Right ventricle myocardium inferior (tissue), 1 donor: ENCODE measurements at regions of chr12 and their contacts with region 1.

Region 1: GRCh38 chr12:125890971-125891370 is 825.7 kb downstream of the AACS start:
- DNase-seq: no peak
- ATAC-seq: peak; percentile 92

Region 2: GRCh38 chr12:125871811-125872594 is 19.0 kb before region 1 on chr12:
- intact Hi-C with region 1: loop called (anchors 1 kb)
- DNase-seq: peak; percentile 55
- ATAC-seq: peak; percentile 97

Region 3: DNA sequence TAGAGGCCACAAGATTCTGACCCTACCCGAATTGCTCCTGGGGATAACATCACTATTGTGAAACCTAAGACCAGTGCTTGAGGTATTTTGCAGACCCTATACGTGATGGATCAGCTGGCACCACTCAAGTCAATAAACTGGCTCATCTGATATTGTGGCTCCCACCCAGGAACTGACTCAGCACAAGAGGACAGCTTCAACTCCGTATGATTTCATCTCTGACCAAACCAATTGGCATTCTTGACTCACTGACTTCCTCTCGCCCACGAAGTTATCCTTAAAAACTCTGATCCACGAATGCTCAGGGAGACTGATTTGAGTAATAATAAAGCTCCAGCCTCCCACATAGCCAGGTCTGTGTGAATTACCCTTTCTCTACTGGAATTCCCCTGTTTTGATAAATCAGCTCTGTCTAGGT is 1339.9 kb after region 1 on chr12:
- intact Hi-C with region 1: no loop called
- DNase-seq: no peak
- ATAC-seq: no peak